ENCODE measurements at regions of chr18 and their contacts with region 1.

Region 1: DNA sequence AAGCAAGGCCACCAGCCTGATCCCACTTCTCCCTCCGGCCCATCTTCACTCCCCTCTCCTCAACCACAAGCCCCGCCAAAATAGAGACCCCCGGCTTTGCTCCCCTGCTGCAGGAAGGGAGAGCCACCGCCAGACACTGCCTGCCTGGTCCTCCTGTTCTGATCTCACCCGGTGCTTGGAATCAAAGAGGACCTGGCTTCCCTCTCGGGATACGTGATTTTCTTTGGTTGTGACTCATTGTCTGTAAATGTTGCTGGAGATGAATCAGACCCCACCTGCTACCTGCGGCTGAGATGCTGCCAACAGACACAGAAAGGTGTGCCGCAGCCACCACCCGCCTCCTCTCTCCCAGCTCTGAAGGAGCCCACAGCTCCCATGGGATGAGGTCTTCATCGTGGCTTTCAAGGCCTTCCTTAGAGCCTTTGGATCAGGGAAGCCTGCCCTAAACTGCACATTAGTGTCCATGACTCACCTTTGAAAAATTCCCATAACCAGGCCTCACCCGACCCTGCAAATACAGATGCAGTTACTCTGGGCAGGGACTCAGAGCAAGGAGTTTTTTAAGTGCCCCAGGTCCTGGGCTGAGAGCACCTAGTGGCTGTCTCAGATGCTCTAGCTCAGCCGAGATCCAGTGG is 79.4 kb upstream of the ZNF532 start:
- DNase-seq: no peak
- CTCF ChIP-seq: no peak

Region 2: DNA sequence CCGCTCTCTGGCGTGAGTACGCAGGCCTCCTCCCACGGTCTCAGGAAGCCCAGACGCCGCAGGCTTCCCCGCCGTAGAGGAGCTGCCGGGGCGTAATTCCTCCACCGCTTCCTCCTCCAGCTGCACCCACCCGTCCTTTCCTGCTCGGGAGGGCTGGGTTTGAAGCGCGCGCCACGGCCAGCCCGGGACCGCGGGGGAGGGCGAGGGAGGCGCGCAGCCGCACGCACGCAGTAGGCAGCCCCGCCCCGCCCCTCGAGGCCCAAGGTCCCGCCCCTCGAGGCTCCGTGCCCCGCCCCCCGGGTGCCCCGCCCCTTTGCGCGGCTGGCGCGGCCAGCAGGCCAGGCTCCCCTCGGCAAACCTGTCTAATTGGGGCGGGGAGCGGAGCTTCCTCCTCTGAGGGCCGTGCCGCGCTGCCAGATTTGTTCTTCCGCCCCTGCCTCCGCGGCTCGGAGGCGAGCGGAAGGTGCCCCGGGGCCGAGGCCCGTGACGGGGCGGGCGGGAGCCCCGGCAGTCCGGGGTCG is 114.1 kb before region 1 on chr18 and contains the start of gene MALT1:
- in situ Hi-C with region 1: no loop called
- DNase-seq: peak; percentile 95
- CTCF ChIP-seq: no peak

Region 3: DNA sequence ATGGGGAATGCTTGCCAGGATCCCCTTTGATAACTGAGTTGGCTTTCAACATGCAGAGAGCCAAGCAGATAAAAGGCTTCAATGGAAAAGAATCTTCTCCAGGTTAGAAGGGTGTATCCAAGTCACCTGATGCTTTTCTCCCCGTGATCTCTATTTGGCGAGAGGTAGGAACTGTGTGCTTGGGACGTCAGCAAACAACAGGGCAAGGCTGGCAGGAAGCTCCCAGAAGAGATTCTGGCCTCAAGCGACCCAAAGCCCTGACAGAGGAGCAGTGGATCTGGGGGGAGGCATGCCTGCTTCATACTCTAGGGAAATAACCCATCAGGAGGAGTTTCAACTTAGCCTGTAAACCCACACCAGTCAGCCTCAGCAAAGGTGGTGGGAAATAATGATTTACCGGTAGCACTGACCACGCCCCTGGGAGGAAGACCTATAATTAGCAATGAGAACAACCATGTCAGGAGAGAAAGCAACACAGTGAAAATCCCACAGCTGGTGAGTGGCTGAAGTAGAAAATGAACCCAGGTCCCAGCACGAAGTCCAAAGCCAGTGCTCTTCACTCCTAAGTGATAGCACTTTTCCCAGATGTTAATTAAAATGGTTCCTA is 278.1 kb after region 1 on chr18:
- in situ Hi-C with region 1: loop called (anchors 5 kb)
- DNase-seq: no peak
- CTCF ChIP-seq: no peak

Region 4: GRCh38 chr18:60413944-60414547 is 1628.8 kb after region 1 on chr18:
- in situ Hi-C with region 1: no loop called
- DNase-seq: no peak
- CTCF ChIP-seq: peak; percentile 45

Measured in GM13976 (cell line).